Activated CD4-positive, alpha-beta T cell treated with anti-CD3 and anti-CD28 coated beads, Interleukin-2, amount 10 ng/mL, durations not matched to agents 7 days and 5 days (primary cell): ENCODE measurements at regions of chr1 and their contacts with region 1.

Region 1: GRCh38 chr1:228471762-228472398 is 15.3 kb upstream of the RNF187 start:
- DNase-seq: peak; percentile 43
- H3K4me3 Mint-ChIP-seq: no peak overlapping the region
- H3K27ac Mint-ChIP-seq: no peak overlapping the region
- H3K4me1 Mint-ChIP-seq: peaks cover 26% of the 10 kb centered on the region
- H3K27me3 Mint-ChIP-seq: peaks cover 21% of the 10 kb centered on the region

Region 2: GRCh38 chr1:228308628-228309363 is 163.1 kb before region 1 on chr1:
- CTCF ChIA-PET with region 1: no interaction called
- POLR2A ChIA-PET with region 1: no interaction called
- DNase-seq: no peak
- H3K4me3 Mint-ChIP-seq: no peak overlapping the region
- H3K27ac Mint-ChIP-seq: no peak overlapping the region
- H3K4me1 Mint-ChIP-seq: no peaks in the 10 kb centered on the region
- H3K27me3 Mint-ChIP-seq: no peaks in the 10 kb centered on the region

Region 3: GRCh38 chr1:228486596-228487335 is 14.9 kb after region 1 on chr1:
- CTCF ChIA-PET with region 1: interaction called, 15 read pairs
- POLR2A ChIA-PET with region 1: no interaction called
- DNase-seq: peak; percentile 81
- H3K4me3 Mint-ChIP-seq: peak overlapping the region; percentile 96
- H3K27ac Mint-ChIP-seq: peak overlapping the region; percentile 100
- H3K4me1 Mint-ChIP-seq: peaks cover 49% of the 10 kb centered on the region
- H3K27me3 Mint-ChIP-seq: no peaks in the 10 kb centered on the region

Region 4: GRCh38 chr1:228500901-228501871 is 29.3 kb after region 1 on chr1:
- CTCF ChIA-PET with region 1: interaction called, 16 read pairs
- POLR2A ChIA-PET with region 1: no interaction called
- DNase-seq: peak; percentile 90
- H3K4me3 Mint-ChIP-seq: peak overlapping the region; percentile 56
- H3K27ac Mint-ChIP-seq: peak overlapping the region; percentile 61
- H3K4me1 Mint-ChIP-seq: peaks cover 34% of the 10 kb centered on the region
- H3K27me3 Mint-ChIP-seq: no peaks in the 10 kb centered on the region

Region 5: DNA sequence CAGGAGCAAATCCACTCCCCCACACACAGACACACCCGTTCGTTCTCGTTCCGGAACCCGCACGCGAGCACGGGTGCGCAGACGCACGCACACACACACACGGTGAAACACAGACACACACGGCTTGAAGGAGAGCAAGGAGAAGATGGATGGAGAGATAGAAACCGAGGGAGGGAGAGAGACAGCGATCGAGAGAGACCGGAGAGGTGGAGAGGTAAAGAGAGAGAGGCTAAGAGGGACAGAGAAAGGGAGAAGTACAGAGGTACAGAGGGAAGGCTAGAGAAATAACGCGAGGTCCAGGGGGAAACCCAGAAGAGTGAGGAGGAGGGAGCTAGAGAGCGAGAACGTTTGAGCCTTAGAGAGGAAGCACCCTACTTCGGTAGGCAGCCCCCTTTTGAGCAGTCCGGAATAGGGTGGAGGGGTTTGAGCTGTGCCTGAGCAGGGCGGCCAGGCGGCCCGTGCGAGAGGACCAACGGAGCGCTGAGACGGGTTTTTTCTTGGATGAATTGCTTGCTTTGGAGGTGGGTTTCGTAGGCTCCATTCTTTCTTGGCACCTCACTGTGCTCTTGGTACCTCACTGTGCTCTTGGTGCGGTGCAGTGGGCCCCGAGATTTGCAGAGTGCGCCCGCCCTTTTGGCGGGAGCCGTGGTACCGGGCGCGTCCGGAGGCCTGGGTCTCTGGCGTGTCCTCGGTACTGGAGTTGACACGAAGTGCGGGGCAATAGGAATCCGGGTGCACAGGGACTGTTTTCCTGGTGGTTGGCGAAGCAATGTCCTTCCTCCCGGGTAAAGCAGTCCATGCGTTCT is 175.0 kb after region 1 on chr1:
- CTCF ChIA-PET with region 1: no interaction called
- POLR2A ChIA-PET with region 1: no interaction called
- DNase-seq: peak; percentile 58
- H3K4me3 Mint-ChIP-seq: peak overlapping the region; percentile 85
- H3K27ac Mint-ChIP-seq: peak overlapping the region; percentile 81
- H3K4me1 Mint-ChIP-seq: peaks cover 27% of the 10 kb centered on the region
- H3K27me3 Mint-ChIP-seq: peaks cover 44% of the 10 kb centered on the region

Region 6: DNA sequence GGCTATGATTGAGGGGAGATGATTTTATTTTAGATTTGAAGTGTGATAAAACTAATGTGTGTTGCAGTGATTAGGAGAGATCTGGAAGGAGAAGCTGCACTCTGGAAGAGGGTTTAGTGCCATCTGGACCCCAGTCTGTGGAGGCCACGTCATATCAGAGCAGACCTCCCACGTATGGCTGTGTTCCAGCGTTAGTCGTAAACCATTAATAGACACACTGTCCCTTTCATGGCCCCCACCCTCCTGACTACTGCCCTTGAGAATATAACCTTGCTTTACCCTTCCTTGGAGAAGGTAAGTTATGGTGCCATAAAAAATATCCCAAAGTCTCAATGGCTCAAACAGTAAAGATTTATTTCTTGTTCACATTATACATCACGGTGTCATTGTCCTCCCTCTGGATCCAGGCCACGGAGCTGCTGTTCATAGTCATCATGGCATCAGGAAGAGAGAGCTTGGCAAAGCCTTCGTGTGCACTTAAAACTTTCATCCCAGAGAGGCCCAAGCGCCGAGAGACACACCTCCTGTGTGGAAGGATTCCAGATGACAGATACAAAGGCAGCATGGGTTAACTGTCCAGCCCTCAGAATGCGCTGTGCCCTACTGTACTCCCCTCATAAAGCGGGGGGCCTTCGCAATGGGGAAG is 296.6 kb after region 1 on chr1:
- CTCF ChIA-PET with region 1: no interaction called
- POLR2A ChIA-PET with region 1: no interaction called
- DNase-seq: no peak
- H3K4me3 Mint-ChIP-seq: no peak overlapping the region
- H3K27ac Mint-ChIP-seq: no peak overlapping the region
- H3K4me1 Mint-ChIP-seq: peaks cover 19% of the 10 kb centered on the region
- H3K27me3 Mint-ChIP-seq: peaks cover 5% of the 10 kb centered on the region